ENCODE measurements at regions of chr13 and their contacts with region 1.

Region 1: DNA sequence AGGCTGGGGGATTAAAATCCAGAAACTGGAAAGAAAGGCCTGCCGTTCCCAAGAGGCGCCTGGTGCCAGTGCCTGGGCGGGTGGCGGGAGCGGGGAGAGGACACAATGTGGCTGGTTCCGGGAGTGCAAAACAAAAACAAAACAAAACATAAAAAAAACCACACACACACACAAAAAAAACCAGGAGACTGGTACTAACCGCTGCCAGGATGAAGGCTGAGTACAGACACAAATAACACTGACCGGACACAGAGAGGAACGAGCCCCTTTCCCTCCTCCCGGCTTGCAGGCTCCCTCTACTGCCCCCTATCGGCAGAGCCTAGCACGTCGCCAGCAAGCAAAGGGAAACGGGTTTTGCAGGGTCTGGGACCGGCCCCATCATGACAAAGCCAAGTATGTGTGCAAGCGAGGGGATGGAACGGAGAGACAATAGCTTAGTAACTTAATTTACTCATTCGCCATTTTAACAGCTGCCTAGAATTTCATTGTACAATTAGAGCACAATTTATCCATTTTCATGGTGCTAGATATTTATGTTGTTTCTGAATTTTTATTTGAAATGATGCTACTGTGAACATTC is 17.9 kb upstream of the ZDHHC20 start:
- DNase-seq: peak; percentile 91
- H3K4me3 Mint-ChIP-seq: peak overlapping the region; percentile 73
- H3K27ac Mint-ChIP-seq: peak overlapping the region; percentile 10
- H3K4me1 Mint-ChIP-seq: peaks cover 8% of the 10 kb centered on the region
- H3K27me3 Mint-ChIP-seq: no peaks in the 10 kb centered on the region

Region 2: GRCh38 chr13:20495082-20496023 is 981.6 kb before region 1 on chr13:
- CTCF ChIA-PET with region 1: no interaction called
- intact Hi-C with region 1: loop called (anchors 10 kb)
- DNase-seq: peak; percentile 81
- H3K4me3 Mint-ChIP-seq: no peak overlapping the region
- H3K27ac Mint-ChIP-seq: no peak overlapping the region
- H3K4me1 Mint-ChIP-seq: no peaks in the 10 kb centered on the region
- H3K27me3 Mint-ChIP-seq: no peaks in the 10 kb centered on the region

Region 3: GRCh38 chr13:21106089-21106488 is 370.9 kb before region 1 on chr13:
- CTCF ChIA-PET with region 1: interaction called, 6 read pairs
- intact Hi-C with region 1: loop called (anchors 1 kb)
- DNase-seq: no peak
- H3K4me3 Mint-ChIP-seq: no peak overlapping the region
- H3K27ac Mint-ChIP-seq: no peak overlapping the region
- H3K4me1 Mint-ChIP-seq: no peaks in the 10 kb centered on the region
- H3K27me3 Mint-ChIP-seq: no peaks in the 10 kb centered on the region

Region 4: DNA sequence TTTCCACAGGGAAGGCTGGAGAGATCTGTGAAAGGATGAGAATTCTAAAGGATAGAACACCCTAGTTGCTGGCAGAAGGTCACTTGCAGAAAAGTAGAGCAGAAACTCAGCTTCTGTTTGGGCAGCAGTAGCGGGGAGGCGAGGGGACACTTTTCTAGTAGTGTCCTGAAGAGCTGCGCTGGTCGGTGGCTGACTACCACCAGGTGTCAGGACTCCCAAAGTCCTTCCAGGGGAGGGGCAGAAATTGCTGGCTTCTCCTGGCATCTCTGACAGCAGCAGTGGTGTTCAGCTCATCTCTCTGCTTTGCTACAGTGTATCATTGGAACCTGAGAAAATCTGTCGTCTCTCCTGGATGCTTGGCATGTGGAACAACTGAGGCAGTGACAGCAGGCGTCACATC is 138.8 kb before region 1 on chr13:
- CTCF ChIA-PET with region 1: interaction called, 4 read pairs
- intact Hi-C with region 1: loop called (anchors 5 kb)
- DNase-seq: no peak
- H3K4me3 Mint-ChIP-seq: no peak overlapping the region
- H3K27ac Mint-ChIP-seq: no peak overlapping the region
- H3K4me1 Mint-ChIP-seq: peaks cover 5% of the 10 kb centered on the region
- H3K27me3 Mint-ChIP-seq: no peaks in the 10 kb centered on the region

Region 5: DNA sequence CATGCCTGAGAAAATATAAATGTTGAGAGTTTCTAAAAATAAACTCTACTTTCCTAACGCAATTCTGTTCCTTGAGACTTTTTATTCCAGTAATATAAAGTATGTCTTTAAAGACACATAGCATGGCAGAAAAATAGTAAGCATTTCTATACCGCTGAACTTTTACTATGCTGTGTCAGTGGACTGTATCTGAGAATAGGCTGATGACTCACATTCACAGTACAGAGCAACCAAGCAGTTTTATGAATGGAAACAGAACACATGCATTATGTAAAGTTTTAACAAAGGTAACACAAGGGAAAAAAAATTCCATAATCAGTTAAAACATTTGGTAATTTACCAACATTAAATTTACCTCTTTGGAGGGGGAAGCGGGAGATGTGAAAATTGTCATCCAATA is 56.3 kb before region 1 on chr13:
- CTCF ChIA-PET with region 1: interaction called, 12 read pairs
- intact Hi-C with region 1: no loop called
- DNase-seq: no peak
- H3K4me3 Mint-ChIP-seq: no peak overlapping the region
- H3K27ac Mint-ChIP-seq: no peak overlapping the region
- H3K4me1 Mint-ChIP-seq: peaks cover 11% of the 10 kb centered on the region
- H3K27me3 Mint-ChIP-seq: no peaks in the 10 kb centered on the region

Region 6: GRCh38 chr13:21465710-21466160 is 11.2 kb before region 1 on chr13:
- CTCF ChIA-PET with region 1: interaction called, 14 read pairs
- intact Hi-C with region 1: no loop called
- DNase-seq: no peak
- H3K4me3 Mint-ChIP-seq: no peak overlapping the region
- H3K27ac Mint-ChIP-seq: no peak overlapping the region
- H3K4me1 Mint-ChIP-seq: no peaks in the 10 kb centered on the region
- H3K27me3 Mint-ChIP-seq: no peaks in the 10 kb centered on the region